PC-9 (cell line): ENCODE measurements at regions of chr10 and their contacts with region 1.

Region 1: DNA sequence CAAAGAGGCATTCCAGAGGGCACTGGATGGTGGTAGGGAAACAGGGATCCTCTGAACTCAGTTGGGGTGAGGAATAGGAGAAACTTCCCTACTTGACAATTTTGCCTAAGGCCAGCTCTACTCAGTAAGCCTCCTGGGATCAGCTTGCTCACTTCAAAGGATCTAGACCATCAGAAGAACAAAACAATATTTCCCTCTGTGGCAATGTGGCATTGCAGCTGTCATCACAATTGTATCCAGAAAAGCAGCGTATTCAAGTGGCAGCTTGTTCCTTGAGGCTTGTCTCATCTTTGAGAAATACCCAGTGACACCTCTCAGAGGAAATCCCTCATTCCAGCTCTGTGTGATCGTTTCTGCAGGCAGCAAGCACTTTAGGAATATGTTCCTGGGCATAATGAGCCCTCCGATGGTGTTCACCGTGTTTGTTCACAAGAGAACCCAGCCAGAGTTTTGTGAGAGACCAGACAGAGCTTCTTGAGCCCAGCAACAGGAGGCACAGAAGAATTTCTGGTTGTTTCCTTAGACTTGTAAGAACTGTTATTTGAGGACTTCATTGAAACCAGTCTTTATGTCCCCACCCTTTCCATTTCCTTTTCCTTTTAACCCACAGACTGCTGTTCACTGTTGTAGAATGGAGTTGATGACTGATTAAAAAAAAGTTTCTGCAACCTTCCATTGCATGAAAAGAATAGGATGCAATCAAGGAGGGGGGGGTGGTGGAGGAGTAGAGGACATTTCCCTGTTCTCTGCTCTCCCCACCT is 747.3 kb downstream of the LRMDA start:
- DNase-seq: no peak
- H3K4me3 ChIP-seq: no peak overlapping the region
- H3K27ac ChIP-seq: no peak overlapping the region
- H3K4me1 ChIP-seq: no peaks in the 10 kb centered on the region
- H3K27me3 ChIP-seq: no peaks in the 10 kb centered on the region
- CTCF ChIP-seq: no peak

Region 2: DNA sequence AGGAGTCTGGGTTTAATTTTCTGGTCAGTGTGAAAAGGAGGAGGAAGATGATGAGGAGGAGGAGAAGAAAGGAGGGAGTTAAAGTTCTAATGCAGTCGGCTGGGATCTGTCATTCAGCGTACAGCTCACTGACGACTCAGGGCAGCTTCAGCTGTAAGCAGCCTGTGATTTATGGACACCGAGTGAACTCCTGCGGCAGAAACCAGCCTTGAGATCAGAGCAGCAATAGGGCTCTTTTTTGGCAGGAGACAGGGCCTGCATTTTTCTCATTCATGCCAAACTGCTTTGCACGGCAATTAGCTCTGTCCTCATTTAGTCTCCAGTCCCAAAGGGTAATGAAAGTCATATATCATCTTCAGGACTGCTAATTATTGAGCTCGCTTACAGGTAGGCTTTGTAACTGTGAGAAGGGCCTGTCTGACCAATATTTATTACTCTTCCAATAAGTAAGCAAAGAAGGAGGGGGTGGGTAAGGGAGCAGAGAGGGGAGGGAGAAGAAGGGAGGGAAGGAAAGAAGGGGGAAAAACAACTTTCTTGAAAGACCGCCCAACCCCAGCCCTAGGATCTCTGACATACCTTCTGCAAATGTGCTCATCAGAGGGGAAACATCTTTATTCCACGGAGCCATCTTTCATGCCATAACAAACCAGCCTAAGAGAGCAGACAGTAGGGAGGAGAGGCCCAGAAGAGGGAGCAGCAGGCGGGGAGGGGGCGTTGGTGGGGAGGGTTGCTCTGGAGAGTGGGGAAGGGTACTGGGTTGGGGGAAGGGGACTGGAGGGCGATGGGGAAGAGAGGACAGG is 894.8 kb before region 1 on chr10:
- CTCF ChIA-PET with region 1: no interaction called
- POLR2A ChIA-PET with region 1: no interaction called
- intact Hi-C with region 1: no loop called
- DNase-seq: no peak
- H3K4me3 ChIP-seq: no peak overlapping the region
- H3K27ac ChIP-seq: no peak overlapping the region
- H3K4me1 ChIP-seq: peaks cover 19% of the 10 kb centered on the region
- H3K27me3 ChIP-seq: no peaks in the 10 kb centered on the region
- CTCF ChIP-seq: no peak

Region 3: DNA sequence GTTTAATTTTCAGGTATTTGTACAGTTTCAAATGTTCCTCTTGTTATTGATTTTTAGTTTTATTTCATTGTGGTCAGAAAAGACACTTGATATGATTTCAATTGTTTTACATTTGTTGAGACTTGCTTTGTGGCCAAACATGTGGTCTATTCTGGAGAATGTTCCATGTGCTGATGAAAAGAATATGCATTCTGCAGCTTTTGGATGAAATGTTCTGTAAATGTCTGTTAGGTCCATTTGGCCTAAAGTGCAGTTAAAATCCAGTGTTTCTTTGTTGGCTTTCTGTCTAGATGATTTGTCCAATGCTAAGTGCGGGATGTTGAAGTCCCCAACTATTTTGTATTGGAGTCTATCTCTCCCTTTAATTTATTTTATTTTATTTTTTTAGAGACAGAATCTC is 847.6 kb before region 1 on chr10:
- CTCF ChIA-PET with region 1: no interaction called
- POLR2A ChIA-PET with region 1: no interaction called
- intact Hi-C with region 1: no loop called
- DNase-seq: no peak
- H3K4me3 ChIP-seq: no peak overlapping the region
- H3K27ac ChIP-seq: no peak overlapping the region
- H3K4me1 ChIP-seq: no peaks in the 10 kb centered on the region
- H3K27me3 ChIP-seq: no peaks in the 10 kb centered on the region
- CTCF ChIP-seq: no peak

Region 4: GRCh38 chr10:75865413-75866299 is 313.1 kb before region 1 on chr10:
- CTCF ChIA-PET with region 1: no interaction called
- POLR2A ChIA-PET with region 1: no interaction called
- intact Hi-C with region 1: no loop called
- DNase-seq: peak in 1 of 2 experiments; percentile 66
- H3K4me3 ChIP-seq: no peak overlapping the region
- H3K27ac ChIP-seq: no peak overlapping the region
- H3K4me1 ChIP-seq: peaks cover 11% of the 10 kb centered on the region; the same call in 1 of the 2 replicates
- H3K27me3 ChIP-seq: no peaks in the 10 kb centered on the region
- CTCF ChIP-seq: no peak

Region 5: DNA sequence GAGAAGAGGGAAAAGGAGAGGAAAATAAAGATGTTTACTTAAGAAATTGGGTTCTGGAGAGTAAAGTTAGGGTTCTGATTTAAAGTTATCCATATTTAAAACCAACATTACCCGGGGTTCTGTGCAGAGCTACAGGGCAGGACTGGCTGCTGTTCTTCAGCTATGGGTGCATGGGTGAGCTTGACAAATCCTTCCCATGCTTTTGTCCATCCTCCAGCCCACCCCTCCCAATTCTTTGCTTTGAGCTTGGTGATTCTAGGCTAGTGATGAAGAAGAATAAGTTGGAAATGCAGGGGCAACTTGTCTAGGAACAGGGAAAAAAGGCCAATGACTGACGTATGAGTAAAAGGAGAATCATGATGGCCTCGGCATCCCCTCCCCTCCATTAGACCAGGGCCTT is 111.3 kb before region 1 on chr10:
- CTCF ChIA-PET with region 1: no interaction called
- POLR2A ChIA-PET with region 1: interaction called, 10 read pairs
- intact Hi-C with region 1: no loop called
- DNase-seq: no peak
- H3K4me3 ChIP-seq: no peak overlapping the region
- H3K27ac ChIP-seq: no peak overlapping the region
- H3K4me1 ChIP-seq: no peaks in the 10 kb centered on the region
- H3K27me3 ChIP-seq: no peaks in the 10 kb centered on the region
- CTCF ChIP-seq: no peak